ENCODE measurements at regions of chr20 and their contacts with region 1.

Region 1: DNA sequence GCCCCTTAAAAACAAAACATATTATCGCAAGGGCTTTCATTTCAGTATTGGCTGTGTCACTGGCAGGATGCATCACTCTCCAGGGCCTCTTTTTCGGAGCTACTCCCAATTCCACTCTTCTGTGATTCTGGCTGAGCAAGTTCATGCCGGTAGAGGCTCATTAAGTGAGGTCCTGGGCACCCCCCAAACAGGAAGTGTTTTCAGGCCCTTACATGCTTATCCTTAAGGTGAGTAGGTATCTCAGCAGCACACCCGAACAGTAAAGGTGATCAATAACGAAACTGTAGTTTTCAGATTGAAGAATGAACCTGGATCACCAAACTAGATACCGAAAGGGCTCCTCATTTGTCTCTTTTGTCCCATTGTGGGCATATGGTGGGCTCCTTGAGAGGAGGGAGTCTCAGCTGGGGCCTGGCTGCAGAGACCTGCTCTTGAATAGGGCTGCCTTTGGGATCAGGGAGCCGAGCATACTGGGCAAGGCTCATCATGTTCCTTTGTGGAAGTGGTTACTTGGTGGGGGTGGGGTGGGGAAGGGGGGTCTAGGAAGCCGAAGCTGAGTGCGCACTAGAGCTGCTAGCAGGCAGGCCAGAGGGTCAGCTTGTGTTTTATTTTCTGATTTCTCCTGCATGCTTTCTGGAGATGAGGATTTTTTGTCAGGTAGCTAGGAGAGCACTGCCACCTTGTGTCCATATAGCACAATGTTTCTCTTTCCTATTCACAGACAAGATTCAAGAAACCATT is 65.2 kb downstream of the CDS2 start:
- DNase-seq: peak in 4 of 5 donors; percentile 55 to 62 (median 58)
- H3K4me3 ChIP-seq: no peak overlapping the region
- H3K4me3 Mint-ChIP-seq: no peak overlapping the region
- H3K27ac ChIP-seq: no peak overlapping the region
- H3K27ac Mint-ChIP-seq: peak overlapping the region; percentile 48 to 92 (median 86)
- H3K4me1 ChIP-seq: peaks cover 7% of the 10 kb centered on the region
- H3K4me1 Mint-ChIP-seq: peaks cover 2 to 8% (median 6%) of the 10 kb centered on the region in 4 donors
- H3K27me3 ChIP-seq: no peaks in the 10 kb centered on the region
- H3K27me3 Mint-ChIP-seq: no peaks in the 10 kb centered on the region

Region 2: GRCh38 chr20:4961746-4962145 is 230.3 kb before region 1 on chr20:
- CTCF ChIA-PET with region 1: no interaction called
- POLR2A ChIA-PET with region 1: no interaction called
- intact Hi-C with region 1: loop called (anchors 2 kb)
- DNase-seq: peak; percentile 28 to 65 (median 36)
- H3K4me3 ChIP-seq: no peak overlapping the region
- H3K4me3 Mint-ChIP-seq: peak overlapping the region in 7 of 8 donors; percentile 56 to 87 (median 73)
- H3K27ac ChIP-seq: peak overlapping the region; percentile 39
- H3K27ac Mint-ChIP-seq: peak overlapping the region; percentile 66 to 97 (median 93)
- H3K4me1 ChIP-seq: peaks cover 19% of the 10 kb centered on the region
- H3K4me1 Mint-ChIP-seq: peaks cover 16 to 25% (median 19%) of the 10 kb centered on the region in 4 donors
- H3K27me3 ChIP-seq: no peaks in the 10 kb centered on the region
- H3K27me3 Mint-ChIP-seq: no peaks in the 10 kb centered on the region

Region 3: GRCh38 chr20:5092765-5093339 is 99.1 kb before region 1 on chr20:
- CTCF ChIA-PET with region 1: no interaction called
- POLR2A ChIA-PET with region 1: no interaction called
- intact Hi-C with region 1: no loop called
- DNase-seq: no peak
- H3K4me3 ChIP-seq: no peak overlapping the region
- H3K4me3 Mint-ChIP-seq: no peak overlapping the region
- H3K27ac ChIP-seq: no peak overlapping the region
- H3K27ac Mint-ChIP-seq: peak overlapping the region in 3 of 7 donors; percentile 10 to 16 (median 15)
- H3K4me1 ChIP-seq: peaks cover 10% of the 10 kb centered on the region
- H3K4me1 Mint-ChIP-seq: peaks cover 8 to 18% (median 10%) of the 10 kb centered on the region in 4 donors
- H3K27me3 ChIP-seq: no peaks in the 10 kb centered on the region
- H3K27me3 Mint-ChIP-seq: no peaks in the 10 kb centered on the region

Region 4: DNA sequence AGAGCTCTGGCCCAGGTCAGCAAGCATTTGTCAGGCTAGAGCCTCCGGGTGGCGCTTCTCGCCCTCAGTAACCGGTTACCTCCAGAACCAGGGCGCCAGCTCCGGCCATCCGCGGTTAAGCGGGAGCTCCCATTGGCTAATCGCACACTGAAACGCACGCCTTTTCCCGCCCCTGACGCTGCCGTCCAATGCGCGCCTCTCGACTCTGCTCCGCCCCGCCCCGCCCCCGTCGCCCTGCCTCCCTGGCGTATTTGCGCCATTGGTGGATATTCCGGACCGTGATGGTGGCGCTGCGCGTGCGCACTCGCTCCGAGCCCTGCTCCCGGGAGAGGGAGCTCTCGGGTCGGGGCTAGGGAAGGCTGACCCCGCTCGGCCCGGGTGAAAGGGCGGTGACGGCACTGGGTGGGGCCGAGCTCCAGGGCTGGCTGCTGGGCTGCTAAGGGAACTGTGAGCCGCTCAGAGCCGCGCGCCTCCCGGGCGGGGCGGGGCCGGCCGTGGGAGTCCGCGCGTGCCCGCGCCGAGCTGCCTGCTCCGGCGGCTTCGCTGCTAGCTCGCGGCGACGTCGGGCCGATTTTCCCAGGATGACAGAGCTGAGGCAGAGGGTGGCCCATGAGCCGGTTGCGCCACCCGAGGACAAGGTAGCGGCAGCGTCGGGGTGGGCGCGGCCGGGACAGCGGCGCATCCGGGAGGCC is 65.3 kb before region 1 on chr20 and contains the start of gene CDS2:
- CTCF ChIA-PET with region 1: interaction called, 173 read pairs
- POLR2A ChIA-PET with region 1: interaction called, 26 read pairs
- intact Hi-C with region 1: loop called (anchors 1 kb)
- DNase-seq: peak; percentile 99 to 100 (median 99)
- H3K4me3 ChIP-seq: peak within 1 kb of the TSS; percentile 72 to 82
- H3K4me3 Mint-ChIP-seq: peak within 1 kb of the TSS; percentile 88 to 97 (median 92)
- H3K27ac ChIP-seq: peak within 1 kb of the TSS; percentile 99
- H3K27ac Mint-ChIP-seq: peak within 1 kb of the TSS; percentile 87 to 99 (median 97)
- H3K4me1 ChIP-seq: peaks cover 31% of the 10 kb centered on the region
- H3K4me1 Mint-ChIP-seq: peaks cover 27 to 38% (median 31%) of the 10 kb centered on the region in 4 donors
- H3K27me3 ChIP-seq: no peaks in the 10 kb centered on the region
- H3K27me3 Mint-ChIP-seq: no peaks in the 10 kb centered on the region
- total RNA-seq, gene CDS2: 59.4 to 59.8 TPM

Region 5: GRCh38 chr20:5181956-5182355 is 10.0 kb before region 1 on chr20:
- CTCF ChIA-PET with region 1: interaction called, 11 read pairs
- POLR2A ChIA-PET with region 1: no interaction called
- intact Hi-C with region 1: no loop called
- DNase-seq: no peak
- H3K4me3 ChIP-seq: no peak overlapping the region
- H3K4me3 Mint-ChIP-seq: no peak overlapping the region
- H3K27ac ChIP-seq: no peak overlapping the region
- H3K27ac Mint-ChIP-seq: peak overlapping the region in 1 of 7 donors; percentile 19
- H3K4me1 ChIP-seq: no peaks in the 10 kb centered on the region
- H3K4me1 Mint-ChIP-seq: peaks cover 0 to 2% (median 0%) of the 10 kb centered on the region in 4 donors
- H3K27me3 ChIP-seq: no peaks in the 10 kb centered on the region
- H3K27me3 Mint-ChIP-seq: no peaks in the 10 kb centered on the region

Region 6: GRCh38 chr20:5222919-5223634 is 31.1 kb after region 1 on chr20:
- CTCF ChIA-PET with region 1: interaction called, 11 read pairs
- POLR2A ChIA-PET with region 1: no interaction called
- intact Hi-C with region 1: no loop called
- DNase-seq: peak; percentile 33 to 53 (median 42)
- H3K4me3 ChIP-seq: no peak overlapping the region
- H3K4me3 Mint-ChIP-seq: no peak overlapping the region
- H3K27ac ChIP-seq: no peak overlapping the region
- H3K27ac Mint-ChIP-seq: no peak overlapping the region
- H3K4me1 ChIP-seq: no peaks in the 10 kb centered on the region
- H3K4me1 Mint-ChIP-seq: peaks cover 0 to 7% (median 2%) of the 10 kb centered on the region in 4 donors
- H3K27me3 ChIP-seq: no peaks in the 10 kb centered on the region
- H3K27me3 Mint-ChIP-seq: peaks cover 0 to 2% of the 10 kb centered on the region in 2 donors

Measured in CD4-positive, alpha-beta memory T cell (primary cell).